ENCODE measurements at regions of chr6 and their contacts with region 1.

Region 1: GRCh38 chr6:89080542-89081422 is at the start of gene PNRC1:
- DNase-seq: peak; percentile 98

Region 2: GRCh38 chr6:88982720-88983119 is 98.1 kb before region 1 on chr6:
- CTCF ChIA-PET with region 1: interaction called, 20 read pairs
- POLR2A ChIA-PET with region 1: interaction called, 13 read pairs
- DNase-seq: peak; percentile 47

Region 3: DNA sequence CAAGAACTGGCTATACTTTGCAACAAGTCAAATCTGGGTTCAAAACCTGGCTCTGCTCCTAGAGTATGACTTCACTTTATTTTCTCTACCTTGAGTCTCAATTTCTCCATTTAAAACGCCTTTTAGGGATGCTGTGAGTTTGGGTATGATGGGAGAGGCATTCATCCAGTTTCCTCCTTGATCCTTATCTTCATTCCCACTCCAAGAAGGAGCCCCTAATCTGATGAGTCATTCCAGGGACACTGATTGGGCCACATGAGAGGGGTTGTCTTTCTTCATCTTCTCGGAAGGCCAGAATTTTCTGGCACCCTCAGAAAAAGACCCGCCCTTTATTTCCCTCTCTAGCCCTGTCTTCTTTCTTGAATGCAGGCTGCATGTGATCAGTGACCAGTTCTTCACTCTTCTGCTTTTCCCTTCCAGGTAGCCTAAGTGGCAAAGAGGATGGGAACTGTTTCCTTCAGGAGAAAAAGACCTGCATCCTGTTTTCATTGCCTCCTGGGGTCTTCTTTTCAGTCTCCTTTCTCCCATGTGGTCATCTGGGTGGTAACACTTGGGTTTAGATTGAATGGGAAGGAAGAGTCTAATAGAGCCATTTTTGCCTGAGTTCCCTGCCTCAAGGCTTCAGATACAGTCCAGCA is 32.4 kb before region 1 on chr6:
- CTCF ChIA-PET with region 1: interaction called, 3 read pairs
- POLR2A ChIA-PET with region 1: interaction called, 10 read pairs
- DNase-seq: no peak

Region 4: DNA sequence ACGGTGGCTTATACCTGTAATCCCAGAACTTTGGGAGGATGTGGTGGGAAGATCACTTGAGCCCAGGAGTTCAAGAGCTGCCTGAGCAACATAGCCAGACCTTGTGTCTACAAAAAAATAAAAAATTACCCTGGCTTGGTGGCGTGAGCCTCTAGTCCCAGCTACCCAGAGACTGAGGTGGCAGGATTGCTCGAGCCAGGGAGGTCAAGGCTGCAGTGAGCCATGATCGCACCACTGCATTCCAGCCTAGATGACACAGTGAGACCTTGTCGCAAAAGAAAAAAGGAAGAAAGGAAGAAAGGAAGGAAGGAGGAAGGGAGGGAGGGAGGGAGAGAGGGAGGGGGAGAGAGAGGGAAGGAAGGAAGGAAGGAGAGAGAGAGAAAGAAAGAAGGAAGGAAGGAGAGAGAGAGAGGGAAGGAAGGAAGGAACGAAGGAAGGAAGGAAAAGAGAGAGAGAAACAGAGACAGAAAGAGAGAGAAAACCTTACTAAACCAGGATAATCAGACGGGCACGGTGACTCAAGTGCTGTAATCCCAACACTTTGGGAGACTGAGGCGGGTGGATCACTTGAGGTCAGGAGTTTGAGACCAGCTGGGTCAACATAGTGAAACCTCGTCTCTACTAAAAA is 11.1 kb before region 1 on chr6:
- CTCF ChIA-PET with region 1: no interaction called
- POLR2A ChIA-PET with region 1: interaction called, 12 read pairs
- DNase-seq: no peak

Region 5: DNA sequence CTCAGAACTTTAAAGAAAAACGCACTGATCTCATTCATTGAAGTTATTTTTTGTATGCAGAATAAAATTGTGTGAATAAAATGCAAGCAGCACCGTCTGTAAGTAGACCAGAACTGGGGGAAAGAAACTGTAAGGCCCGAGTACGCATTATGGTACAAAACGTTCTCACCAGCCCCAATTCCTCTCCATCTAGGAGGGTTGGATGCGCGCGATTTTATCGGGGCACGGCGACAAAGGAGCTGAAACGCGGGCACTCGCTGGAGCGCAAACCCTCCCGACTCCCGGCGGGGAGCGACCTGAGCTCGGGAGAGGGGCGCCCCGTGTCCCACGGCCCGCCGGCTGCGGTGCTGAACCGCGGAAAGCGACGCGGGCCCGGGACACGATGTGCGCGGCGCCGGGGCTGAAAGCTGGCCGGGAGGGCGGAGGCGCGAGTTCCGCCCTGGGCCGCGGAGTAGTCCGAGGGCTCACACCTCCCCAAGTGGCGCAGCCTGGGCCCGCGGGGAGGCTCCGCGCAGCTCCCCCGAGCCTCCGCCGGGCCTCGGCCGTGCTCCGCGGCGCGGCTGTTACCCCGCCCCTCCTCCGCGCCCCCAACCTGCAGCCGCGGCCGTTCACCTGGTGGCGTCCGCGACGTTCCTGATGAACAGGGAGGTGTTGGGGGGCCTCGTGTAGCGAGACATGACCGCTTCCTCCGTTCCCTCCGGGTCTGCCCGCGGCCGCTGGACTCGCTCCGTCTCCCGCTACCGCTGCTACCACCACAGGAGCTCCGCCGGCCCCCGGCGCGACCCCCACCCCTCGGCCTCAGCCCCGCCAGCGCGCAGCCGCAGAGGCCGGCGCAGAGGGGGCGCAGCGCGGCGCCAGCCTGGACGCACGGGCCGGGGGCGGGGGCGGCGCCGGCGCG is 36.7 kb after region 1 on chr6 and contains the start of gene SRSF12:
- CTCF ChIA-PET with region 1: interaction called, 4 read pairs
- POLR2A ChIA-PET with region 1: interaction called, 20 read pairs
- DNase-seq: peak; percentile 70

Region 6: DNA sequence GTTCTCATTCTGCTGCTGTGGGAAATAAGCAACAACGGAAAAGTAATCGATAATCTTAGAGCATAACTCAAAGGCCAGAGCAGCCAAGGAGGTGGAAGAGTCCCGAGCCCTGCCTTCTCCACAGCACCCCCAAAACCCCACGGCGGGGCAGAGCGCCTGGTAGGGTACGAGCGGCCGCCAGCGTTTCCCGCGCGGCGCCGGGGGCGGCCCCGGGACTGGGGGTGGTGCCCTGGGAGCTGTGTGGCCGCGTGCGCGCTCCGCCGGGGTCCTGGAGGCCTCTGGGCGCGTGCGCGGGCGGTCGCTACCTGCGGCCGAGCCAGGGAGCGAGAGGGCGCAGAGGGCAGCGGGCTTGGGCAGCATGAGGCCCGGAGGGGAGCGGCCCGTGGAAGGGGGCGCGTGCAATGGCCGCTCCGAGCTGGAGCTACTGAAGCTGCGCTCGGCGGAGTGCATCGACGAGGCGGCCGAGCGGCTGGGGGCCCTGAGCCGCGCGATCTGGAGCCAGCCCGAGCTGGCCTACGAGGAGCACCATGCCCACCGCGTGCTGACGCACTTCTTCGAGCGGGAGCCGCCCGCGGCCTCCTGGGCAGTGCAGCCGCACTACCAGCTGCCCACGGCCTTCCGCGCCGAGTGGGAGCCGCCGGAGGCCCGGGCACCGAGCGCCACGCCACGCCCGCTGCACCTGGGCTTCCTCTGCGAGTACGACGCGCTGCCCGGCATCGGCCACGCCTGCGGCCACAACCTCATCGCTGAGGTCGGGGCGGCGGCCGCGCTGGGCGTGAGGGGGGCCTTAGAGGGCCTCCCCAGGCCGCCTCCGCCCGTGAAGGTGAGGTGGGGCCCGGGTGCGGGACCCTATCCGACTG is 65.2 kb after region 1 on chr6 and contains the start of gene PM20D2:
- CTCF ChIA-PET with region 1: no interaction called
- POLR2A ChIA-PET with region 1: interaction called, 46 read pairs
- DNase-seq: peak; percentile 72

Measured in HEK293T (cell line).